Testis (tissue), 5 donors: ENCODE measurements at regions of chr2 and their contacts with region 1.

Region 1: GRCh38 chr2:27303093-27304025 is 4.9 kb downstream of the UCN start:
- DNase-seq: peak; percentile 69
- H3K4me3 ChIP-seq: no peak overlapping the region
- H3K27ac ChIP-seq: no peak overlapping the region
- H3K4me1 ChIP-seq: no peaks in the 10 kb centered on the region
- H3K27me3 ChIP-seq: no peaks in the 10 kb centered on the region
- CTCF ChIP-seq: peak; percentile 89 to 95 (median 90)
- POLR2A ChIP-seq: no peak

Region 2: DNA sequence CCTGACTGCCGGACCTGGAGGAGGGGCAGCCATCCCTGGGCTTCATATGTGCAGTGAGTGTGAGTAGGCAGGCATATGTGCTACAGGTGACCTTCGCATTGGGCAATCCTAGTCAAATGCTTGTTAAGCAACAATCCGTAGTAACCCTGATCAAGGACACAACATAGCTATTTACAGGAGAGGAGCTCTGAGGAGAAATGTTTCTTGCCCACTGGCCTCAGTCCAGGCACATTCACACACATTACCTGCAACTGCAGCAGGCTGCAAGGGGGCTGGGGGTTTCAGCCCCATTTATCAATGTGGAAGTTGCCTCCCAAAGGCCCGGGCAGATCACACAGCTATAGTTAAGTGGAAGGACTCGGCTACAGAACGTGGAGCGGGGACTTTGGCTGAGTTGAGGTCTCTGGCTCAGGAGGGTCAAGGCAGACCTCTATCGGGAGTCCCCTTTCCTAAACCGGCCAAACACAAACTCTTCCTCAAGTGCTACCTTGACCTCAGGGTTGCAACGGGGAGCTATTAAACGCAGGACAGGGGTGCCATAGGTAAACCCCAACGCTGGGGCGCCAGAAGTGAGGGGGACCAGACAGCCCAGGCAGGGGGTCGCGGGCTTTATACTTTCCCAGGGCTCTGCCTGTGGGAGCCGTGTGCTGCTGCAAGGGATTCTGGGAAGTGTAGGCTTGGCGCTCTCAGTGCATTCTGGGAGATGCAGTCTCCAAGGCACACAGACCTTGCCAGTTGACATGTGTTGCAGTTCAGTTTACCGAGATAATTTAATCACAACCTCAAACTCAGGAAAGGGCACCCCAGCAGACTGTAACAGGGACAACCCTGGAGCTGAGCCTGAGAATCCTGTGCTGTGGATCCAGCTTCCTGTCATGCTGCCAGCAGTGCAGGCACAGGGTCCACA is 207.4 kb before region 1 on chr2:
- intact Hi-C with region 1: loop called (anchors 10 kb)
- DNase-seq: peak; percentile 86
- H3K4me3 ChIP-seq: peak overlapping the region in 1 of 2 donors; percentile 43
- H3K27ac ChIP-seq: no peak overlapping the region
- H3K4me1 ChIP-seq: peaks cover 29% of the 10 kb centered on the region
- H3K27me3 ChIP-seq: no peaks in the 10 kb centered on the region
- CTCF ChIP-seq: no peak
- POLR2A ChIP-seq: no peak